ENCODE measurements at regions of chr15 and their contacts with region 1.

Region 1: DNA sequence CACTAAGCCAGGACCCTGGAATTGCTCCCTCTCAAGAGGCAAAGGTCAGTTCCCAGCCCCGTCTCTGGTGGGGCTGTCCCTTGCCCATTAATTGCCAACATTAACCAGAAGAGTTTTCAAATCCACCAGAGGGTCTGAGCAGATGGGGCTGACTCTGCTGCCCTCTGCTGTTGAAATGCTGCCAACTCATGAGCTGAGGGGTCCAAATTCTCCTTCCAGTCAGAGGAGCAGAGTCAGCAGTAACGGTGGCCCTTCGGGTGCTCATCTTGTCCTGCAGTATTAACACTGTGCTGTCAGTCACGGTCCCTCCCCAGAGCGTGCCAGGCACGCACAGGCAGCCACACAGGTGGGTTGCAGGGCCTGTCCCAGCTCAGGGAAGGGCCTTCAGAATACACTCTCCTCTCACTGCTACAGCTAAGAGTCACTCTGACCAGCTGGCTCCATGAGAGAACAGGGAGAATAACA is 10.7 kb upstream of the SPTBN5 start:
- DNase-seq: peak in 1 of 2 experiments; percentile 68
- H3K4me3 ChIP-seq: no peak overlapping the region
- H3K27ac ChIP-seq: no peak overlapping the region
- H3K4me1 ChIP-seq: no peaks in the 10 kb centered on the region
- H3K27me3 ChIP-seq: no peaks in the 10 kb centered on the region
- CTCF ChIP-seq: peak; percentile 80

Region 2: DNA sequence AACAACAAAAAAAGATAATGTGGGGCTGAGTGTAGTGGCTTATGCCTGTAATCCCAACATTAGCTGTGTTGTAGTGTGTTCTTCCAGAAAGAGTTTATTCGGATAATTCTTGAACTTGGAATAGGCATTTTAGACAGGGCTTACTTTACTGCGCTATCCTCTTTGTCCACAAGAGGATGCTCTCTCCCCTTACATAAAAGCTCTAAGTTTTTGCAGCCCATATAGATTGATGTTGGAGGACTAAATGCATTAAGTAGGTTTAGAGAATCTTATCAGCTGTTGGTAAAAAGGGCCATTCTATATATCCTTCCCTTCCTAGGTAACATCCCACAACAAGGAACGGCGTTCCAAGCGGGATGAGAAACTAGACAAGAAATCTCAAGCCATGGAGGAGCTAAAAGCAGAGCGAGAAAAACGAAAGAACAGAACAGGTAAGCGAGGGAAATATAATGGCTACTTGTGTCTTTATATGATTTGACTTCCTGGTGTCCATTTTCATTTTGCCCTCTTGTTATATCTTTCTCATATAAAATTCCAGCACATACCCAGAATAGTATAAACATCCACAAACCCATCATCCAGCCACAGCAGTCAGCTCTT is 438.7 kb before region 1 on chr15:
- CTCF ChIA-PET with region 1: no interaction called
- POLR2A ChIA-PET with region 1: interaction called, 5 read pairs
- intact Hi-C with region 1: loop called (anchors 1 kb)
- DNase-seq: no peak
- H3K4me3 ChIP-seq: no peak overlapping the region
- H3K27ac ChIP-seq: no peak overlapping the region
- H3K4me1 ChIP-seq: no peaks in the 10 kb centered on the region
- H3K27me3 ChIP-seq: no peaks in the 10 kb centered on the region
- CTCF ChIP-seq: peak; percentile 82

Region 3: DNA sequence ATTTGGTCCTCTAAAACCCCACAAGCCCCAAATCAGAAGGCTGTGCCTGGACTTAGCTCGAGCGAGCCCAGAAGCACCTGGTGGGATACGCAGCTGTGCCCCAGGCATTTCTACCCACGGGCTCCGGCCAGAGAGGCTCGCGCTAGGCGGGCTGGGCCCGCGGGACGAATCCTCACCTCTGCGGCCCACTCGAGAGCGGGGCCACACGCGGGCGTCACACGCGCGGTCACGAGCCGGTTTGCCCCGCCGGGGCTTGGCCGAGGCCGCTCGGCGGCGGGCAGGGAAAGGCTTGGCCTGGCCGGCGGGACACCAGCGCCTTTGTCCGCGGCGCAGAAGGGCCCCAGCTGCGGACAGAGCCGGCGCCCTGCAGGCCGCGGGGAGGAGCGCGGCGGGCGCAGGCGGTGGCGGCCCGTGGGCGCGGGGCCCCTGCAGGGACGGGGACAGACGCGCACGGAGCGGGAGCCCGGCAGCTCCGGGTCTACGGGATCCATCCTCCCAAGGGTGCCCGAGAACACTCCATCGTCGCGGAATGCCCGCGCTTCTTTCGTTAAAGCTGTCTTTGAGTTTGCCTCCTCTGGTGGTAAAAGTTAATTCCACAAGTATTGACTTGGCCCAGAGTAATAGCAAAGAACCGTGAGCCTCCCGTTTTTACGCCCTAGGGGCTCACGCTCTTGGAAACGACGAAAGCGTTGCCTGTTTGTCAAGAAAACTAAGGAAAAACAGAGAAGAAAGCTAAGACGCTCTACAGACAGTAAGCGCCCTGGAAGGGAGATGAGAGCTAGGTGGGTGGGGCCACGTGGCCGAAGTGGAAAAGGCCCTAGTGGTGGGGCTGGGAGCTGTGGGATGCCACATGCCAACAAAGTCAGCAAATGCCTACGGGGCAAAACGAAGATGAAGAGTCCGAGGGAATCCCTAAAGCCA is 319.2 kb before region 1 on chr15:
- CTCF ChIA-PET with region 1: interaction called, 5 read pairs
- POLR2A ChIA-PET with region 1: no interaction called
- intact Hi-C with region 1: loop called (anchors 10 kb)
- DNase-seq: peak; percentile 57 to 64
- H3K4me3 ChIP-seq: peak overlapping the region; percentile 38; the same call in 1 of the 2 replicates
- H3K27ac ChIP-seq: 0 out of 2 replicates have a peak overlapping the region, but pooled peaks have one; percentile 23
- H3K4me1 ChIP-seq: peaks cover 22% of the 10 kb centered on the region
- H3K27me3 ChIP-seq: no peaks in the 10 kb centered on the region
- CTCF ChIP-seq: no peak

Region 4: DNA sequence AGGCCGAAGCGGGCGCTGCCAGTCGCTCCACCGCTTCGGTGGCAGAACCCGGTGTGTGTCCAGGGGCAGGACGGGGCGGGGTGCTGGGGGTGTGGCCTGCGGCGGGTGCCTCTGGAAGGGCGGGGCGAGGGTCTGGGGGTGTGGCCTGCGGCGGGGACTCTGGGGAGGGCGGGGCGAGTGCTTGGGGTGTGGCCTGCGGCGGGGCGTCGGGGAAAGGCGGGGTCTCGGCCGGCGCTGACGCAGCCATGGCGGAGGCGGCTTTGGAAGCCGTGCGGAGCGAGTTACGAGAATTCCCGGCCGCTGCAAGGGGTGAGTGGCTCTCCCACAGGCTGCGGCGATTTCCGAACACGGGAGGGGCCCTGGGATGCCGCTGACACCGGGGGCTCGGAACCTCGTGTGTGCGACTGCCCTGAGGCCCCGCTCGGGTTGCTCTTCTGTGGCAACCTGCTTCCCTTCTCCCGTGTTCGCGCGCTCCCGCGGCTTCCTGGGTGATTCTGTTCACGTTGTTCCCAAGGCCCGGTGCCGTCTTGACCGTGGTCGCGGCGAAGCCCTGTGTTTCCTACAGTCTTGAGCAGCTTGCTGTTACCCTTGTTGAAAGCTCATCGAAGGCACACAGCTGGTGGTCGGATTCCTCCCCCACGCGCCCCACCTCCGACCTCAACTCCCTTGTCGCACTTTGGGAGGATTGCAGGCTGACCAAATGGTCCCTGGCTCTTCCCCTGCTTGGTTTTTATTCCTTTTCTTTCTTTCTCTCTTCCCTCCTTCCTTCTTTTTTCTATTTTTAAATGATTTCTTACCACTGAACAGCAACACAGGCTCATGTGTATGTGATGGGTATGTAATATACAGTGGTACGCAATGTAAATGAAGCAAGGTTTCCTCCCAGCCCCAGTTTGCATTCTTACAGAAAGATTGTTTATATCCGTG is 76.4 kb before region 1 on chr15 and contains the start of gene JMJD7:
- CTCF ChIA-PET with region 1: interaction called, 4 read pairs
- POLR2A ChIA-PET with region 1: no interaction called
- intact Hi-C with region 1: loop called (anchors 2 kb)
- DNase-seq: peak; percentile 51 to 93
- H3K4me3 ChIP-seq: peak within 1 kb of the TSS; percentile 81
- H3K27ac ChIP-seq: no peak within 1 kb of the TSS
- H3K4me1 ChIP-seq: peaks cover 16% of the 10 kb centered on the region
- H3K27me3 ChIP-seq: no peaks in the 10 kb centered on the region
- CTCF ChIP-seq: no peak
- total RNA-seq, gene JMJD7: 6.5 and 11.7 TPM in 2 replicates

Region 5: DNA sequence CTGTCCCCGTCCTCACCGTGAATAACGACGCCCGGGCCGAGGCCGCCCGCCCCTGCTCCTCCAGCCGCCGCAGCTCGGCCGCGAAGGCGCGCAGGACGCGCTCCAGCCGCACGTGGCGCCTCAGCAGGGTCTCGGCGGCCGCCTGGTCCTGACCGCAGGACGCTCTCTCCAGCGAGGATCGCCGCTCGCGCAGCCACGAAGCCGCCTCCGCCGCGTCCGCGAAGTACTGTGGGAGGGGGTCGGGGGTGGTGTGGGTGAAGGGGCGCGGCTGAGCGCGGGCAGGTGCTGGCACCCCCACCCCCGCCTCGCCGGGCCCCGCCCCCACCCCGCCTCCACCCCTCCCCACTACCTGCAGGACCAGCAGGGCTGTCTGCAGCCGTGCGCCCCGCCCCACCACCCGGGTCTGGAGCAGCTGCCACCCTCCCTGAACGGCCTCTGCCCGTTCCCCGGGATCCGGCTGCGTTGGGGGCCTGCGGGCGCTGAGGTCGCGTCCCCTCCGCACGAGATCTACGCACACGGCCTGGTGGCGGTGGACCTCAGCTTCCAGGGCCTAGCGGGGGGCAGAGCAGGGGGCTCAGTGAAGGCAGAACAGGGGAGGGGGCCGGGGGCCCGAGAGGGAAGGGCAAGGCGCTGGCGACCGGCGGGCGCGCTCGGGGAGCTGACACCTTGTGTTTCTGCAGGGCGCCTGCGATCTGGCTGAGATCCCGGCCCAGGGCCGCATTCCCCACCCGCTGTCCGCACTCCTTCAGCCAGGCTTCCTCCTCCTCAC is 22.5 kb before region 1 on chr15:
- CTCF ChIA-PET with region 1: no interaction called
- POLR2A ChIA-PET with region 1: no interaction called
- intact Hi-C with region 1: no loop called
- DNase-seq: peak in 1 of 2 experiments; percentile 61
- H3K4me3 ChIP-seq: peak overlapping the region; percentile 42; the same call in 1 of the 2 replicates
- H3K27ac ChIP-seq: no peak overlapping the region
- H3K4me1 ChIP-seq: no peaks in the 10 kb centered on the region
- H3K27me3 ChIP-seq: no peaks in the 10 kb centered on the region
- CTCF ChIP-seq: no peak

Region 6: DNA sequence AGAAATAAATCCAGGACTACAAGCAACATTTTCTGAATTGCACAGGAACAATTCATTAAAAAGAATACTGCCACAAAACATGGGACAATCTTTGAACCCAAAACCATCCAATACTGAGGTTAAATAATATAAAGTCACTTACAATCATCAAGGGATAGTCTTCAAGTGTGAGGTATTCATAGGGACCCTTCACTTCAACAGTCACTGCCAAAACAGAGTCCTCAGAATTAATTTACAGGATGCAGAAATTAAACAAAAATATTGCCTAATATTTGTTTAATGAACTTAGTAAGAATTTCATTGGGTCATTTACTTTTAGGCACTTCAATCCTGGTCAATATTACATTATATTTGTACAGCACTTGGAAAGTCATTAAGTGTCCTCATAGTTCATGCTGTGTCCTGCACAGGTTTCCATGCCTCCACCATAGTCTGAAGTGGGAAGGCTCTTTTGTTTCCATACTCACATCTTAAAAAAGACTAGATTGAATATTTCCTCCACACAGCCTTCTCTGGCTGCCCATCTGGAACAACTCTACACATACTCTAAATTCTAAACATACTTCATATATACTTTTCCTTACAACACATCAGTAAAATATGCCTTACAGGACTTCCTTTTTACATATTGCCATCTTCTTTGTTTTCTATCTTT is 335.1 kb after region 1 on chr15:
- CTCF ChIA-PET with region 1: no interaction called
- POLR2A ChIA-PET with region 1: no interaction called
- intact Hi-C with region 1: no loop called
- DNase-seq: no peak
- H3K4me3 ChIP-seq: no peak overlapping the region
- H3K27ac ChIP-seq: no peak overlapping the region
- H3K4me1 ChIP-seq: no peaks in the 10 kb centered on the region
- H3K27me3 ChIP-seq: no peaks in the 10 kb centered on the region
- CTCF ChIP-seq: no peak

Measured in PC-9 (cell line).